ENCODE measurements at regions of chr9 and their contacts with region 1.

Region 1: DNA sequence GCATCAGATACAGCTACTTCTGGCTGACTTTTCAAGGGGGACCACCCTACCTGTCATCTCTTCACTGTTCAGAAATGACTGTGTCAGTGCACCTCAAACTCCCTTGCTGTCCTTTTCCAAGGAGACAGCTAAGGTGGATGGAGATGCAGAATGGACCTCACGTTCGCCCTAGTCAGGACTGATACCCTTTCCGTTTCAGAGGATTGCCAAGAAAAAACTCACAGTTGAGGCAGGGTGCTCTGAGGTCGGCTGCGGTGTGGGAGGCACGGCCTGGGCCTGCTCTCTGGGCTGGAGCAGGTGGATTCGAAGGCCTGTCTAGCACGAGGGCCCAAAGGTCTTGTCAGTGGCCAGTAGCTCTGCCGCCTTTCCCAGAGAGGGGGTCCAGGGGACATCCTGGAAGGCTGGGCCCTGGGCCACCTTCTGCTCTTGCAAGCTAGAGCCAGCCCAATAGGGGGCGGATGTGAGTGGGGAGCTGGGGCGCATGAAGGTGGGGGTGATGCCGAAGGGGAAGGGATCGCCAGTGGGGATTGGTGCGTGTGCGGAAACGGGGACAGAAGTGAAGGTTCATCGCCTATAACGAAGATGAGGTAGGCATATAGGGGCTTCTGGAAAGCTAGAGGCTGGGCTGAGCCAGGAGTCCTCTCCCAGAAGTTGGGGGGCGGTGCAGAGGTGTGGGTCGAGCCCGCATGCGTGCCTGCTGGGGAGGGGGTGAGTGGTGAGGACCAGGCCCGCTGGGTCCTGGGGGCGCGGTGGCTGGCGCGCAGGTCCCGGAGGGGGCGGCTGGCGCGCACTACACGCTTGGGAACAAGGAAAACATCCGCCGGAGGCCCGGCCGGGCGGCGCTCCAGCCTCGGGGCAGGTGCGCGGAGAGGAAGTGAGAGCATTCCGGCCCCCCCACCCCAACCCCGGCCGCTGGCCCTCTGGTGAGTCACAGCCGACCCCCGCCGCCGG is 2.5 kb upstream of the MSMP start:
- DNase-seq: peak; percentile 78
- CTCF ChIP-seq: peak; percentile 84

Region 2: GRCh38 chr9:35014517-35014916 is 742.0 kb before region 1 on chr9:
- CTCF ChIA-PET with region 1: no interaction called
- POLR2A ChIA-PET with region 1: no interaction called
- DNase-seq: no peak
- CTCF ChIP-seq: no peak

Region 3: DNA sequence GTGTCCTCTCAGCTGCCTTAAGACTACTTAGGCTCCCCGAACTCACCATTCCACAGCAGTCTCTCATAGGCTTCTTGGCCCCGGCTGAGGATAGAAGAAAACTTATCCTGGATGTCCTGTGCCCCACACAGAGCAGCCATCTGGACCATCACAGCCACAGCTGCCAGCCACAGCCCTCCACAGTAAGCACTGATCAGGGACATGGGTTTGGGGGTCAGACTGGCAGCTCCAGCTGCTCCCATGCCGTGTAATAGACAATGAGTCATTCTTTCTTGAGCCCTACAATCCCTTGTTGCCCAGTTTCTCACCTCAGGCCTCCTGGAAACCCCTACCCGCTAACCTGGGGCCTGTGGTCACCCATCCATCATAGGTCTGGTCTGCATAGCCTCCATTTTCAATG is 18.4 kb before region 1 on chr9:
- CTCF ChIA-PET with region 1: interaction called, 24 read pairs
- POLR2A ChIA-PET with region 1: interaction called, 4 read pairs
- DNase-seq: no peak
- CTCF ChIP-seq: no peak

Region 4: GRCh38 chr9:35774907-35775635 is 18.5 kb after region 1 on chr9:
- CTCF ChIA-PET with region 1: interaction called, 42 read pairs
- POLR2A ChIA-PET with region 1: interaction called, 4 read pairs
- DNase-seq: no peak
- CTCF ChIP-seq: no peak